Spleen (tissue), 13 donors: ENCODE measurements at regions of chr3 and their contacts with region 1.

Region 1: GRCh38 chr3:158918008-158918407 is 116.2 kb downstream of the MFSD1 start:
- DNase-seq: no peak
- H3K4me3 ChIP-seq: no peak overlapping the region
- H3K27ac ChIP-seq: no peak overlapping the region
- H3K4me1 ChIP-seq: no peaks in the 10 kb centered on the region
- H3K27me3 ChIP-seq: no peaks in the 10 kb centered on the region
- CTCF ChIP-seq: peak in 7 of 11 experiments; percentile 7 to 45 (median 32)
- POLR2A ChIP-seq: no peak

Region 2: GRCh38 chr3:159252772-159253384 is 334.9 kb after region 1 on chr3:
- intact Hi-C with region 1: loop called (anchors 10 kb)
- DNase-seq: no peak
- H3K4me3 ChIP-seq: no peak overlapping the region
- H3K27ac ChIP-seq: no peak overlapping the region
- H3K4me1 ChIP-seq: no peaks in the 10 kb centered on the region
- H3K27me3 ChIP-seq: no peaks in the 10 kb centered on the region
- CTCF ChIP-seq: peak in 7 of 11 experiments; percentile 23 to 49 (median 31)
- POLR2A ChIP-seq: no peak